Right ventricle myocardium inferior (tissue), 1 donor: ENCODE measurements at regions of chr10 and their contacts with region 1.

Region 1: GRCh38 chr10:49109669-49110340 is 5.5 kb downstream of the VSTM4 start:
- DNase-seq: peak; percentile 85
- ATAC-seq: peak; percentile 87

Region 2: DNA sequence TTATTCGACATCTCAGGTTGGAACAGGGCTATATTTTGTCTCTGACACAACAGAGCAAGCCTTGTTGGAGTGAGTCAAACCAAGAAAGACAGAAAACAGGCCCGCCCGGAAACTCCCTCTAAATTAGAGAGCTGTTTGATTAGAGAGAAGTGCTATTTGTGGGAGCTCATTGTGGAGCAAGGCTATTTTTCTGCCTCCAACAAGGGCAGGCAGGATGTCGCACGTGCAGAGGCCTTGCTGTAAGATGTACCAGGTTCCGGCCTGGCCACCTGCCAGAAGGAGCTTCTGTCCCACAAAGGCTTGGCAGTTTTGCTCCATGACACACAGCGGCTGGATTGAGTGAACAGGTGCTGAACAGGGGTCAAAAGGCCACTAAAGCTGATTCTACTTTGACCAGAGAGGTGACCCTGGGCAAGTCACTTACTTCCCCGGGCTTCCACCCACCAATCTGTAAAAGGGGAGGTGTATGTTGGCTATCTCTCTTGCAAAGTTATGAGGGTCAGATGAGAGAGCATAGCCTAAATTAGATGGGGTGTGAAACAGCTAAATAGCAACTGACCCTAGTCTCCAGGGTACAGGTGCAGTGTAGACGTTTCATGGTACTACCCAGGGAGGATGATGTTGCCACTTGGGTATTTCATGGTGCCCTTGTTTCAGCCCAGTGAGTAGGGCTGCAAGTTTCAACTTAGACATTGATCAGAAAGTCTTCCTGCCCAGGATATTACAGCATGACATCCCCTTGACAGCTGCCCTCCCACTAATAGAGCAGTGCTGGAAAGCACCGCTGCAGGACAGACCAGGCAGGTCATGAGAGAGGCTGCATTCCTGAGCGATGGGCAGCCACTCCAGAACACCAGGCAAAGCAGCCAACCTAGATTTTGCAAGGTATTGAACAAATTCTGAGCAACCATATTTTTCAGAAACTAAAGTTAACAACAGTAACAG is 56.5 kb before region 1 on chr10:
- intact Hi-C with region 1: loop called (anchors 2 kb)
- DNase-seq: peak; percentile 74
- ATAC-seq: peak; percentile 61

Region 3: DNA sequence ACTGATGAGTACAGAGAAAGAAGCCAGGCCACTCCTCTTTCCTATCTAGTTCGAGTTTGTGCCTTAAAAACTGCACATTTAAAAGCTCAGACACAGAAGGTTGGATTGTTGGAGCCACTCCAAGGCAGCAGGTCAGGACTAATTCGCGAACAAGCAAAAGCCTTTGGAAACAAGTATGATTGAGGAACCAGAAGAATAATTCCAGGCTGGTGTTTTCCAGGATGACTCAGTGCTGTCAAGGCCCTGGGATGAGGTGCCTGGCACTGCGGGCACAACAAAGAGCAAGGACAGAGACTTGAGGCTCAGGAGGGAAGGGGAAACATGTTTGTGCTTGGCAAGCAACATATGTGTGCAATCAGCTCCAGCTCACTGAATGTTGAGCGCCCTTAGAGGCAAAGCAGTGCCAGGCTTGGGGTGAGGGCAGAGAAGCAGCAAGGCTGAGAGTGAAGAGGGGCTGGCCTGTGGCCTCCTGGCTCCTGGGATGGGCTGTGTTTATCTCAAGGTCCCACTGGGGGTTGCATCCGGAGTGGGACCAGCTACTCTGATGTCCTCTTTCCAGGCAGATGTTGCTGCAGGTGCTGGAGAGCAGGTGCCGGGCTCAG is 38.5 kb before region 1 on chr10:
- intact Hi-C with region 1: loop called (anchors 5 kb)
- DNase-seq: no peak
- ATAC-seq: peak; percentile 30